ENCODE measurements at regions of chr17 and their contacts with region 1.

Region 1: GRCh38 chr17:35627417-35627816 is 40.3 kb downstream of the AP2B1 start:
- DNase-seq: no peak
- H3K4me3 ChIP-seq: no peak overlapping the region
- H3K27ac ChIP-seq: no peak overlapping the region
- H3K4me1 ChIP-seq: no peaks in the 10 kb centered on the region
- H3K27me3 ChIP-seq: no peaks in the 10 kb centered on the region
- CTCF ChIP-seq: peak in 1 of 6 experiments; percentile 11
- POLR2A ChIP-seq: no peak

Region 2: DNA sequence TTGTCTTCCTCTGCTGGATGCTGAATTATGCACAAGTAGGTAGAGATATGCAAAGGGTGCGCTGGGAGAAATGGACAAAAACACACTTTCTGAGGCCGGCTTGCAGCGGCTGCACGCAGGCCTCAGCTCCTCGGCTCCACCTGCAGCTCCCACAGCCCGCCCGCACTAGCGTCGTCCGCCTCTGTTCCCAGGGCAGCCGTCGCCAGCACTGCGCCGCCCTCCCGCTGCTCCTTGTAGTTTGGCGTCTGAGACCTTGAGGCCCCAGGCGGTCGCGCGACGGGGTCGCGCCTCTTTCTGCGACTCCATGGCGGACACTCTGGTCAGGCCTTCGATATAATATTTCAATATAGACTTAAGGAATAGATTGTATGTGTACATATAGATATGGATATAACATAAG is 219.9 kb before region 1 on chr17:
- intact Hi-C with region 1: no loop called
- DNase-seq: no peak
- H3K4me3 ChIP-seq: no peak overlapping the region
- H3K27ac ChIP-seq: no peak overlapping the region
- H3K4me1 ChIP-seq: no peaks in the 10 kb centered on the region
- H3K27me3 ChIP-seq: no peaks in the 10 kb centered on the region
- CTCF ChIP-seq: no peak
- POLR2A ChIP-seq: no peak

Region 3: GRCh38 chr17:35555695-35556094 is 71.7 kb before region 1 on chr17:
- intact Hi-C with region 1: no loop called
- DNase-seq: no peak
- H3K4me3 ChIP-seq: no peak overlapping the region
- H3K27ac ChIP-seq: no peak overlapping the region
- H3K4me1 ChIP-seq: no peaks in the 10 kb centered on the region
- H3K27me3 ChIP-seq: peaks cover 0 to 74% (median 0%) of the 10 kb centered on the region in 4 donors
- CTCF ChIP-seq: peak in 1 of 6 experiments; percentile 7
- POLR2A ChIP-seq: no peak

Region 4: GRCh38 chr17:35695613-35696012 is 68.2 kb after region 1 on chr17:
- intact Hi-C with region 1: loop called (anchors 10 kb)
- DNase-seq: no peak
- H3K4me3 ChIP-seq: no peak overlapping the region
- H3K27ac ChIP-seq: no peak overlapping the region
- H3K4me1 ChIP-seq: no peaks in the 10 kb centered on the region
- H3K27me3 ChIP-seq: no peaks in the 10 kb centered on the region
- CTCF ChIP-seq: no peak
- POLR2A ChIP-seq: no peak